HEK293T (cell line): ENCODE measurements at regions of chr11 and their contacts with region 1.

Region 1: GRCh38 chr11:67613960-67614715 is 7.4 kb downstream of the NDUFV1 start:
- DNase-seq: peak; percentile 66

Region 2: GRCh38 chr11:67583247-67584204 is 30.6 kb before region 1 on chr11 and contains the start of gene GSTP1:
- CTCF ChIA-PET with region 1: no interaction called
- POLR2A ChIA-PET with region 1: interaction called, 13 read pairs
- DNase-seq: peak; percentile 92